ENCODE measurements at regions of chr19 and their contacts with region 1.

Region 1: DNA sequence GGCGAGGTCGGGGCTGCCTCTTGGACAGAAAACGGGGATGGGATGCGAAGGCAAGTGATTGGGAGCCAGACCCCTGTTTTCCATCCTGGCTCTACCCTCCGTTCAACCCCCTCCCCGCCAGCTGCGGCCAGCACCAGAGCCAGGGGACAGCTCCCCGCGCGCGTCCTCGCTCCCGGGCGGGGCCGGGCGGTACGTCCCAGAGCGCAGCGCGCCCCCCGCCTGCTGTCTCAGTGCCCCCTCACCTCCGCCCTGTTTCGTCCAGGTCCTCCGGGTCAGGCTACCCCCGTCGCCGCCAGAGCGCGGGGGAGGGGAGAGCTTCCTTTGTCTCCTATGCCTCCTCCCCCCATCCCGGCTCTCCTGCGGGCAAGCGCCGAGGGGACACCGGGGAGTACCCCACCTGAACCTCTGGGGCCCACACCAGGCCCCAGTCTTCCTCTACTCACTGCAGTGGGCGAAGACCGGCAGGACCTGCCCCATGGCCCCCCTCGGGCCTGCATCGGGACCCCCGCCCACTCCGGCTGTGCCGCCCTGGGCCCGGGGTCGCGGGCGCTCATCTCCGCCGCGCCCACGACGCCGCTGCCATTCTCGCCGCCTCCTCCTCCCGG is 396 bp downstream of the RTN2 start:
- DNase-seq: no peak
- H3K4me3 ChIP-seq: peak overlapping the region; percentile 72 to 85 (median 77)
- H3K27ac ChIP-seq: no peak overlapping the region
- H3K4me1 ChIP-seq: peaks cover 23% of the 10 kb centered on the region
- H3K27me3 ChIP-seq: no peaks in the 10 kb centered on the region
- CTCF ChIP-seq: no peak

Region 2: DNA sequence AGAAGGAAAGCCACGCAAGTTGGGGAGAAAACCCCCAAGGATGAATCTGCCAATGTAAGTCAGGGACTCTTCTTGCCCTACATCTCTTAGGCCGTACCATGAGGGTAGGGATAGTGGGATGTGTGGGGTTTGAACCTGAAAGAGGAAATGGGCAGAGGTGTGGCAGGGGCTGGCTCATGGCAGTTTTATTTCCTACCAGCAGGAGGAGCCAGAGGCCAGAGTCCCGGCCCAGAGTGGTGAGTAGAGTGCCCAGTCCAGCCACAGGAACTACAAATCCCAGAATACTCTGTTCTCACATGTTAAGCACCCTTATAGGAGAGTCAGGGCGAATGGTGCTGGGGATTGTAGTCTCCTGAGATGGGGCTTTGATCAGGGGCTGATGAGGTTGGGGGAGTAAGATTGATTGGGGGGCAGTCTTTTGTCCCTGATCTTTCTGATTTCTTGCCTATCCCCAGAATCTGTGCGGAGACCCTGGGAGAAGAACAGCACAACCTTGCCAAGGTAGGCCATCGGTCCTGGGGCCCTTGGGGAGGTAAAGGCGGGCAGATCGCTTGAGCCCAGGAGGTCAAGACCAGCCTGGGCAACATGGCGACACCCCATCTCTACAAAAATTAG is 27.3 kb after region 1 on chr19:
- CTCF ChIA-PET with region 1: no interaction called
- dilution Hi-C with region 1: no loop called
- in situ Hi-C with region 1: no loop called
- intact Hi-C with region 1: no loop called
- DNase-seq: peak; percentile 72
- H3K4me3 ChIP-seq: no peak overlapping the region
- H3K27ac ChIP-seq: no peak overlapping the region
- H3K4me1 ChIP-seq: peaks cover 22% of the 10 kb centered on the region
- H3K27me3 ChIP-seq: no peaks in the 10 kb centered on the region
- CTCF ChIP-seq: peak; percentile 90 to 91

Region 3: DNA sequence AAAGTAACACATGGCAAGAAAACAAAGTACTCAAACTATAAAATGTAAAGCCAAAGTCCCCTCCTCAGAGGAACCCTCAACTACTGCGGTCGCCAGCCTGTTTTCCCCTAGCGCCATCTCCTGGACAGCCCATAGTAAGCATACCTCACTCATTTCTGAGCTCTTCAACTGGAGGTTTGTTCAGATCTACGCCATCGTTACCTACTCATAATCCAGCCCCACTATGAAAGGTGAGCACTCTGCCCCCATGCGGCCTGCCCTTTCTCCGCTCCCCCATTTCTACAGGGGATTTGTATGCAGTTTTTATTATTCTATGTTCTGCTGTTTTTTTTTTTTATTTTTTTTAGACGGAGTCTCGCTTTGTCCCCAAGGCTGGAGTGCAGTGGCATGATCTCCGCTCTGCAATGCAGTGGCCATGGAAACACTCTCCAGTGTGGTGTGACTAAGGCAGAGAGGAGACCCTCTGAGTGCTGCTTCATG is 62.0 kb after region 1 on chr19:
- CTCF ChIA-PET with region 1: no interaction called
- dilution Hi-C with region 1: no loop called
- in situ Hi-C with region 1: no loop called
- intact Hi-C with region 1: loop called (anchors 1 kb)
- DNase-seq: peak; percentile 40
- H3K4me3 ChIP-seq: no peak overlapping the region
- H3K27ac ChIP-seq: no peak overlapping the region
- H3K4me1 ChIP-seq: peaks cover 20% of the 10 kb centered on the region
- H3K27me3 ChIP-seq: no peaks in the 10 kb centered on the region
- CTCF ChIP-seq: peak; percentile 88 to 90

Region 4: DNA sequence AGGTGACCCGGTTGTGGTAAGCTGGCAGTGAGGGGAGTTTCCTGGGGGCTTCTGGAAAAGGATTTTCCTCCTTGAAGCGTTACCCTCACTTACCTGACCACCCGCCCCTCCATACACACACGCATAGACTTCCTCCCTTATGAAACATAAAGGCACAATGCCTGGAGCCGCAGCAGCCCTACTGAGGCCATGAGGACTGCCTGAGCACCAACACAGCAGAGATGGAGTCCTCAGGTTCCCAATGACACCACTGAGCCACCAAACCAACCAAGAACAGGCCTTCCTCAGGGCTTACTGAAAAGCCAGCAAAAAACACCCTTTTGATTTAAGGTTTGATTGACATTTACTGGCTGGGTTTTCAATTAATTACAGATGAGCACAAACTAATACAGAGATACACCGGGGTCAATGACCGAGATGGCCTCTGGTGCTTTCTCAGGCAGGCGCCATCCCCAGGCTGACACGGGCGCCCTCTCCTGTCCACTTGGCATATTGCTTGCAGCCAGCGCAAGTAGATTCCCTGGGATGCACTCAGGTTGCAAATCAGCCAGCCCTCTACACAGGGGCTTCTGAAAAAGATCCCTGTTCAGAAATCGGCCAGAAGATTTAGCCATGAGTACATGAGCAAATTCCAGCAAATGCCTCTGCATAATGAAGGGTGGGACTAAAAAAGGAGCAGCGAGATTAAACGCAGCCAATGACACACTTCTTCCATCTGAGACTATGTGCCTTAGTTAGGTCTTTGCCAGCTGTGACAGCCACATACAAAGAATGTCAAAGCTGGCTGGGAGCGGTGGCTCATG is 73.4 kb after region 1 on chr19:
- CTCF ChIA-PET with region 1: no interaction called
- dilution Hi-C with region 1: no loop called
- in situ Hi-C with region 1: no loop called
- intact Hi-C with region 1: loop called (anchors 1 kb)
- DNase-seq: no peak
- H3K4me3 ChIP-seq: no peak overlapping the region
- H3K27ac ChIP-seq: peak overlapping the region; percentile 79
- H3K4me1 ChIP-seq: peaks cover 28% of the 10 kb centered on the region
- H3K27me3 ChIP-seq: no peaks in the 10 kb centered on the region
- CTCF ChIP-seq: peak; percentile 78 to 79